Right ventricle myocardium inferior (tissue), 1 donor: ENCODE measurements at regions of chr12 and their contacts with region 1.

Region 1: GRCh38 chr12:15590180-15590826 is 198.9 kb downstream of the EPS8 start:
- DNase-seq: no peak
- ATAC-seq: peak; percentile 80

Region 2: DNA sequence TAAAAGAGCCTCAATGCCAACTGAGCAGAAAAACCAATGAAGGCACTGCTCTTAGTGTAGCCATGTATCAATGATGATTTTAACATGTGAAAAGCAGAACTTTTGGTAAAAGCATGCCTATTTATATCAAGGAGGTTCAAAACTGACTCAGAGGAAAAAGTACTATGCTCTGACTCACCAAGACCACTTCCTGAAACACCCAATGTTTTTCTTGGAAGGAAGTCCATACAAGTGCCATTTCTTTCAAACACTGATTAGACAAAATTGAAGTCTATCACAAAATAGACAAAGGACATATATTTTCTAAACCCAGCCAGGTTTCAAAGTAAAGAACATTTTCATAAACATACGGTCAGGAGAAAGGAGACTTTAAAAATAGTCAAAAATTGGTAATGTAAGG is 110.3 kb after region 1 on chr12:
- intact Hi-C with region 1: loop called (anchors 10 kb)
- DNase-seq: no peak
- ATAC-seq: peak; percentile 75

Region 3: GRCh38 chr12:15772405-15773018 is 182.2 kb after region 1 on chr12:
- intact Hi-C with region 1: loop called (anchors 5 kb)
- DNase-seq: no peak
- ATAC-seq: no peak

Region 4: GRCh38 chr12:15789220-15790171 is 199.2 kb after region 1 on chr12 and contains the start of gene EPS8:
- intact Hi-C with region 1: loop called (anchors 5 kb)
- DNase-seq: peak; percentile 94
- ATAC-seq: peak; percentile 98
- total RNA-seq, gene EPS8: 20.7 TPM

Region 5: DNA sequence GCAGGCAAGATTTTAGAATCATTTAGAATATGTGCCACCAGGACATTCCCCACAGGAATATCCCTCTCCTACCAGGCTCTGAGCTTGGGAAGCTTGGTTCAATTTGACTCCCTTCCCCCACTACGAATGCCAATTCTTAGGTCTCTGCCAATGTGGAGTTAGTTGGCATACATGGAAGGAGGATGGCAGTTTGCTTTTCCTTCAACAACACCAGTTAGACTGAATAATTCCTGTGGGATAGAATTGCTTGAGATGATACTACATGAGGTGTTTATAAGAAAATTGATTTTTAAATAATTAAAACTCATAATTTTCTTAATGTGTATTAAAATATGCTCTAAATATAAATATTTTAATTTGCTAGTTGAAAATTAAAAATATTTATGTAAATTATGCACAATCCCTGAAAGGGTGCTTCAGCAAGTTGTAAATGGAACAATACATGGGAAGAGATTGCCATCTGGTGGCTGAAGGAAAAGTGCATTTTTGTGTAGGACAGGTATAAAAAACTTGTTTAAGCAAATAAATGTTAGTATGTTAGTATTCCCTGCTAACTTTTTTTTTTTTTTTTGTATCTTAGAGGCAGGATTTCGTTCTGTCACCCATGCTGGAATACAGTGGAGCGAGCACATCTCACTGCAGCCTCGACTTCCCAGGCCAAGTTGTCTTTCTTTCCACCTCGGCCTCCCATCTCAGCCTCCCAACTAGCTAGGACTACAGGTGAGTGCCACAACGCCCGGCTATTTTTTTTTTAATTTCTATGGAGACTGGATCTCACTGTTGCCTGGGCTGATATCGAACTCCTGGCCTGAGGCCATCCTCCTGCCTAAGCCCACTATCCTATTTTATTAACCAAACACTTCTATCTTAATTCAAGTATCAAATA is 266.0 kb after region 1 on chr12:
- intact Hi-C with region 1: loop called (anchors 1 kb)
- DNase-seq: no peak
- ATAC-seq: no peak